ENCODE measurements at regions of chr19 and their contacts with region 1.

Region 1: DNA sequence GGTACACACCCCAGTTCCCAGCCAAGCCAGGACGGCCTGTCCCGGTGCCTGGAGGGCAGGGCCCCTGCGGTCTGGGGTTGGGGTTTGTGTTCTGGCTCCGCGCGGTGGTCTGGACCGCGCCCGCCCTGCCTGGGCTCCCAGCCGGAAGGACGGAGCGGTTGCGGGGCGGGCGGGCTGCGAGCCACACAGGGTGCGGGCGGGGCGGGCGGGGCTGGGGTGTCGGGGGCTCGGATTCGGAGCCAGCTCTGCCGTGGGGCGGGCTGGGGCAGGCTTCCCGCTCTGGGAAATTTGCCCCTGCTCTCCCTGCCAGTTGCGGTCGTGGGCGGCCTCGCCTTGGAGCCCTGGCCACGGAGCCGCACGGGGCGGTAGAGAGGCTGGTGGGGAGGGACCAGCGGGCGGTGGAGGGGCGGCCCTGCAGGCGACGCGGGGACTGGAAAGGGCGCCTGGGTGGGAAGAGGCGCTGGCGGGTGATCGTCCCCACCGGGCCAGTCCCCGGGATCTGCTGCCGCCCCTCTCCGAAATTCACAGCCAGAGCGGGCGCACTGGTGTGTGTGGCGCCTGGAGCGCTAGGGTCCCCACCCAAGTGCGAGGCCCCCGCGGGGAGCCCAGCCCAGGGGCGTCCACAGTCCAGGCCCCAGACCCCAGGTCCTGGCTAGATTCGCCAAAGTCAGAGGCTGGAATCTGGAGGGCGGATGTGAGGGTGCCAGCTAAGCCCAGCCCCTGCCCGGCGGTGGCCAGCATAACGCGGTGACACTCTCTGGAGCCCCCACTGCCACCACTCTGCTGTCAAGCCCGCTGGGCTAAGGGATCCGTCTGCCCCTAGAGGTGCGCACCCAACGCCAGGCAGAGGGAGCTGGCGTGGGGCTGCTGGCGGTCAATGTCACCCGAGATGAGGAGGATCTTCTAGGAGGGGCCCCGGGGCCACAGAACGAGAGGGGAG is 11.0 kb upstream of the ZNF492 start:
- DNase-seq: peak; percentile 60 to 84 (median 80)
- H3K4me3 ChIP-seq: peak overlapping the region; percentile 15
- H3K27ac ChIP-seq: peak overlapping the region; percentile 68 to 86
- H3K4me1 ChIP-seq: peaks cover 19% of the 10 kb centered on the region
- H3K27me3 ChIP-seq: no peaks in the 10 kb centered on the region
- CTCF ChIP-seq: peak in 1 of 3 donors; percentile 16
- EP300 ChIP-seq: no peak
- POLR2A ChIP-seq: no peak

Region 2: GRCh38 chr19:22532388-22533300 is 90.5 kb before region 1 on chr19:
- intact Hi-C with region 1: loop called in 1 of 4 experiments (anchors 10 kb)
- DNase-seq: peak; percentile 98 to 99 (median 99)
- H3K4me3 ChIP-seq: peak overlapping the region; percentile 44
- H3K27ac ChIP-seq: peak overlapping the region; percentile 88 to 94
- H3K4me1 ChIP-seq: no peaks in the 10 kb centered on the region
- H3K27me3 ChIP-seq: no peaks in the 10 kb centered on the region
- CTCF ChIP-seq: peak; percentile 42 to 79 (median 53)
- EP300 ChIP-seq: no peak
- POLR2A ChIP-seq: peak; percentile 99

Region 3: DNA sequence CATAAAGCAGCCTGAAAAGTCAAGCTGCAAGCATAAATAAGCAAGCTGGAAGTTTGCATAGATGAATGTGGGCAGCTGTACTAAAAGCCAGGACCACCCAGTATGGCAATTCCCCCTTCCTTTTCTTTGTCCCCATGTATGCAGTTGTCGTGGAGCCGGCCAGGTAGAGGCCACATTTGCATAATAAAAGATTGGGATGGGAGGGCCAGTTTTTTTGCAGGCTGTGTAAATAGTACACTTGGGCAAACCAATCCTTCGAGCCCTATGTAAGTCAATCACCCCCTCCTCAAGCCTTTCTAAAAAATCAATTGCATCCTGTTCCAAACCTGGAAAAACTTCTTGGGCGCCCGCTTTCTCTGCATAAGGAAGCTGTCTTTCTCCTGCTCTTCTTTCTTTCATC is 173.9 kb after region 1 on chr19:
- intact Hi-C with region 1: no loop called
- DNase-seq: no peak
- H3K4me3 ChIP-seq: no peak overlapping the region
- H3K27ac ChIP-seq: no peak overlapping the region
- H3K4me1 ChIP-seq: no peaks in the 10 kb centered on the region
- H3K27me3 ChIP-seq: no peaks in the 10 kb centered on the region
- CTCF ChIP-seq: no peak
- EP300 ChIP-seq: no peak
- POLR2A ChIP-seq: no peak

Region 4: DNA sequence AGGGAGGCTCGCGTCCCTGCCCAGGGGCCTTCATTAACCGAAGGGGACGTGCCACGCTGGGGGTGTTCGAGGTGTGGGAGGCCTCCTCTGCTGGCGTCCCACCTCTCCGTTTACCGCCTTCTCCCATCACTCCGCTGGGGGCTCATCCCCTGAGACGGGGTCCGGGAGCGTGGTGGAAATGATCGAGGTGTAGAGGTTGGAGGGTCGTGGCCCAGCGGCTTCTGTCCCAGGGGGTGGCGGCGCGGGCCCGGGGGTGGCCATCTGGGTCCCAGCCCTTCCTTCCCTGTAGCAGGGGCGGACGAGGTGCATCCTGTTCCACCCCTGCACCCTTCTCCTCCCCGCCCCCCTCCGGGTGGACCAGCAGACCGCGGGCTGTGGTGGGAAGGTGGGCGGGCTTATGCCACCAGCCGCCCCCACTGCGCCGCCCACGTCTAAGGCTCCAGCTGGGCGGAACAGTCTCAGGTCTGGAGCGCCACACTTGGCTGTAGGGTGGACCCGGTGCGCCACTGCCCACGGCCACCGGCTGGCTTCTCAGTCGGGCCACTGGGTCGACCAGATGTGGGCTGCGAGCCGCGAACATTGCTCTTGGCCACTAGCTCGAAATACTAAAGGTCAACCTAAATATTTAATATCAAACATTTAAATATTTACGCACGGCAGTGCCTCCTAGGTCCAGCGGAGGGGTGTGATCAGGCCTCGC is 278.4 kb after region 1 on chr19:
- intact Hi-C with region 1: no loop called
- DNase-seq: no peak
- H3K4me3 ChIP-seq: no peak overlapping the region
- H3K27ac ChIP-seq: no peak overlapping the region
- H3K4me1 ChIP-seq: no peaks in the 10 kb centered on the region
- H3K27me3 ChIP-seq: no peaks in the 10 kb centered on the region
- CTCF ChIP-seq: no peak
- EP300 ChIP-seq: no peak
- POLR2A ChIP-seq: no peak

Measured in ovary (tissue), 10 donors.